ENCODE measurements at regions of chr11 and their contacts with region 1.

Region 1: DNA sequence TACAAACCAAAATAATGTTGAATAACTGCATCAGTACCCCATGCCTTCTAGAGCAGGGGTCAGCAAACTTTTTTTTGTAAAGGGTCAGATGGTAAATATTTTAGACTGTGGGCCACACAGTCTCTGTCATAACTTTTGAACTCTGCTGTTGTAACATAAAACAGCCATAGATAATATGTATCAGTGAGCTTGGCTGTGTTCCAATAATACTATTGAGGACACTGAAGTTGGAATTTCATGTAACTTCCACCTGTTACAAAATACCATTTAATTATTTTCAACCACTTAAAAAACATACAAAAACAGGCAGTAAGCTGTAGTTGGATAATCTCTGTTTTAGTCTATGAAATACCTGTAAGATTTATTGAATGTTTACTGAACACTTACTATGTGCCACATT is 55.2 kb downstream of the PICALM start:
- DNase-seq: no peak

Region 2: DNA sequence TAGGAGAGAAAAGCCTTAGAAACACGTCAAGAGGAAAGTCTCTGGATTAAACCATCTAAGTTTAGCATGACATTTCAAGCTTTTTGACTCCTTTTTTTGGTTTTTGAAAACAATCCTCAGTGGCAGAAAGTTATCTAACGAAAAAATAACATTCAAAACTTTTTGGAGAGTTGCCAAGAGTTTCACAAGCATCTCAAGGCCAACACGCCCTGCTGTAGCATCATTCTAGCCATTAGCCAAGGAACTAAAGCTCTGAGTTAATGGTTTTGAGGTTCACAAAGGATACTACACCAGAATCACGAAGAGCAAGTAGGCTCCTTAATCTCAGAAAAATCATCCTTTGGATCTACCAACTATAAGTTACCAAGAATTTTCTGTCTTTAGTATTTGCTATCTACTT is 39.6 kb before region 1 on chr11:
- intact Hi-C with region 1: loop called in 1 of 2 experiments (anchors 1 kb)
- DNase-seq: no peak

Region 3: DNA sequence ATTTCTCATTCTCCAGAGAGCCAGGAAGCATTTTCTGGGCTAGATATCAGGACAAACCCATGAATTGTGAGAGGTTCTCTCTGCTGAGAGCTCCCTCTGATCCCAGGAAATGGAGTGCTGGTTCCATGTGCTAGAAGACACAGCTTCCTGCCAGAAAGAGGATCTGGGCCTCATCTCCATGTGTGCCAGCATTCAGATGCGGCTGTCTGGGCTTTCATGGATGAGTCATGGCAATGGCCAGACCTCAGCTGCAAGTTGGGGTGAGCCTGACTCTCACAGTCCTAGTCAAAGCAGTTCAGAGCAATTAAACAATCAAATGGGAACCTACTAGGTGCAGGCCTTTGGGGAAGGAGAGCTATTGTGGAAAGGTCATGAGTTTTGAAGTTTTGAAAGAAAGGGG is 148.5 kb after region 1 on chr11:
- intact Hi-C with region 1: no loop called
- DNase-seq: peak; percentile 84

Measured in posterior vena cava (tissue), 2 donors.